ENCODE measurements at regions of chr20 and their contacts with region 1.

Region 1: GRCh38 chr20:22180244-22180643 is 404.1 kb downstream of the FOXA2 start:
- DNase-seq: no peak
- H3K4me3 ChIP-seq: no peak overlapping the region
- CTCF ChIP-seq: no peak
- POLR2A ChIP-seq: no peak

Region 2: DNA sequence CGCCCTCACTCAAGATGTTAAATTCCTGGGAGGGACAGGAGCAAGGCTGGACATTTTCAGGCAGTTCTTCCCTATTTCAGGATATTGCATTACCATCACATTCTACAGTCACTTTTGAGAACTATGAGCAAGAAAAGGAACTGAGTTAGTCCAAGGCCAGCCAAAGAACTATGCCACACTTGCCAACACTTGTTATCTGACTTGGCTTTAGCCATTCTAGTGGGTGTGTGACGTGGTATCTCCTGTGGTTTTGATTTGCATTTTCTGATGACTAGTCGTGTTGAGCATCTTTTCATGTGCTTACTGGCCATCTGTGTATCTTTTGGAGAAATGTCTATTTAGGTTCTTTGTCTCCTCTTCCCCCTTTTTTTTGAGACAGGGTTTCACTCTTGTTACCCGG is 865.1 kb before region 1 on chr20:
- intact Hi-C with region 1: loop called (anchors 5 kb)
- DNase-seq: no peak
- H3K4me3 ChIP-seq: no peak overlapping the region
- CTCF ChIP-seq: no peak
- POLR2A ChIP-seq: no peak